Activated CD4-positive, alpha-beta memory T cell treated with anti-CD3 and anti-CD28 coated beads for 36 hours (primary cell): ENCODE measurements at regions of chr20 and their contacts with region 1.

Region 1: GRCh38 chr20:45934586-45935415 is at the start of gene PCIF1:
- DNase-seq: peak; percentile 99
- H3K4me3 Mint-ChIP-seq: peak within 1 kb of the TSS; percentile 99
- H3K27ac Mint-ChIP-seq: peak within 1 kb of the TSS; percentile 99
- H3K4me1 Mint-ChIP-seq: peaks cover 32% of the 10 kb centered on the region
- H3K27me3 Mint-ChIP-seq: no peaks in the 10 kb centered on the region
- total RNA-seq, gene PCIF1: 29.9 to 33.0 TPM

Region 2: DNA sequence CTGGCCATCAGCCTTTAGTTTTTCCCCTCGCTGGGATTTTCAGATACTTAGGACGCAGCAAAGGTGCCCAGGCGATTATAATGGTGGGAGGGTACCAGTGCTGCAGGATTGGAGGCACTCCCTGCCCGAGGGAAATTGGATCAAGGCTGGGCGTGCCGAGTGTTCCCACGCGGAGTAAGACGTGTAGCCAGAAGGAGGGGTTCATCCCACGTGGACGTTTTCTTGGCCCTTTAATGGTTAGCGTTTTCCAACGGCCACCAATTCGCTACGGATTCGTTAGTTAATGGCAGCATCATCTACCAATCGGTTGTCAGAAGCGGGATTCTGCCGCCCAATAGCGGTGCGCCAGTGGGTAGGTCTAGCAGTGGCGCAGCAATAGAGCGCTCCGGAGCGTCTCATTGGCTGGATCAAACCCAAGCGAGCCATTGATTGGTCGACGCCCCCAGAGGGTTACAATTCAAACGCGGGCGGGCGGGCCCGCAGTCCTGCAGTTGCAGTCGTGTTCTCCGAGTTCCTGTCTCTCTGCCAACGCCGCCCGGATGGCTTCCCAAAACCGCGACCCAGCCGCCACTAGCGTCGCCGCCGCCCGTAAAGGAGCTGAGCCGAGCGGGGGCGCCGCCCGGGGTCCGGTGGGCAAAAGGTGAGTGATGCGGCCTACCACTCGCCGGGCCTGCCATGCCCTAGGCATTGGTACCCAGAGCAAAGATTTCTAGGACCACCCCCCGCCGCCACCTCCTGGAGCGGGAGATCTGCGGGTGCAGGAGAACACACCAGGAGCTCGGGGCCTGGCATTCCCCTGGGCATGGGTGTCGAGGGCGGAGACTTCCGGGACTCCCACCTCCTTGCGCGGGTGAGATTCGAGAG is 122.4 kb before region 1 on chr20 and contains the start of gene UBE2C:
- CTCF ChIA-PET with region 1: interaction called, 3 read pairs
- POLR2A ChIA-PET with region 1: interaction called, 12 read pairs
- intact Hi-C with region 1: loop called (anchors 1 kb)
- DNase-seq: peak; percentile 98
- H3K4me3 Mint-ChIP-seq: peak within 1 kb of the TSS; percentile 91
- H3K27ac Mint-ChIP-seq: peak within 1 kb of the TSS; percentile 68
- H3K4me1 Mint-ChIP-seq: peaks cover 13% of the 10 kb centered on the region
- H3K27me3 Mint-ChIP-seq: no peaks in the 10 kb centered on the region
- total RNA-seq, gene UBE2C: 192 to 196 TPM

Region 3: DNA sequence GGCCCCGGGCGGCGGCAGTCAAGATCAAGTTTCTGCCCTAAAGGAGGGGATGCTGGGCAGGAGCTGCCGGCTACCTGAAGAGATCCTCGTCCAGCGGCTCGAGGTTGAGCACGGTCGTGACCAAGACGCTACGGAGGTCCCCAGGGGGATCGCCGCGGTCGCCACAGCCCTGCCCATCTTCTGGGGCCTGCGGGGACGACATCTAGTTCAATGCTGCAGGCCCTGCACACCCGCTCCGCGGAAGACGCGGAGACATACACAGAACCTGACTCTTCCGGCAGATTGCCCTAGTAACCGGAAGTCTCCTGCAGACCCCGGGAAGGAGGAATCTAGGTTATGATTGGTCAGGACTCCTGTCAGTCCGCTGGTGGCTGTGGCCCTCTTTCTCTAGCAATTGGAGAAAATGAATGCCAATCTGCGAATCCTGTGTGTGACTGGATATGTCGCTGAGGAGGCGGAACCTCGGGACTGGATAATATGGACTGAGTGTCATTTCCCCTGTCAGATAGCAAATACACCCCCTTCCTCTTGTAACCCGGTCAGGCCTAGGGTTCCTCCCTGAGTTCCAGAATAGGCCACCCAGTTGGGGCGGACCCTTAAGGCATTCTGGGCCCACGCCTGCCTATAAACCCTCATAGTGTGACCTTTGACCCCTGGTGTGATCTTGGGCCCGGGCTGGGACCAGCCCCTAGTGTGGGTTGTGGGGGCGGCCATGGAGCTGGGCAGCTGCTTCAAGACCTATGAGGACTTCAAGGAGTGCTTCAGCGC is 77.5 kb before region 1 on chr20 and contains the starts of genes ACOT8 and ZSWIM3:
- CTCF ChIA-PET with region 1: no interaction called
- POLR2A ChIA-PET with region 1: interaction called, 8 read pairs
- intact Hi-C with region 1: loop called (anchors 1 kb)
- DNase-seq: peak; percentile 96
- H3K4me3 Mint-ChIP-seq: peak within 1 kb of the TSS; percentile 97
- H3K27ac Mint-ChIP-seq: peak within 1 kb of the TSS; percentile 97
- H3K4me1 Mint-ChIP-seq: peaks cover 35% of the 10 kb centered on the region
- H3K27me3 Mint-ChIP-seq: no peaks in the 10 kb centered on the region
- total RNA-seq, gene ACOT8: 25.5 to 29.0 TPM
- total RNA-seq, gene ZSWIM3: 4.7 TPM

Region 4: DNA sequence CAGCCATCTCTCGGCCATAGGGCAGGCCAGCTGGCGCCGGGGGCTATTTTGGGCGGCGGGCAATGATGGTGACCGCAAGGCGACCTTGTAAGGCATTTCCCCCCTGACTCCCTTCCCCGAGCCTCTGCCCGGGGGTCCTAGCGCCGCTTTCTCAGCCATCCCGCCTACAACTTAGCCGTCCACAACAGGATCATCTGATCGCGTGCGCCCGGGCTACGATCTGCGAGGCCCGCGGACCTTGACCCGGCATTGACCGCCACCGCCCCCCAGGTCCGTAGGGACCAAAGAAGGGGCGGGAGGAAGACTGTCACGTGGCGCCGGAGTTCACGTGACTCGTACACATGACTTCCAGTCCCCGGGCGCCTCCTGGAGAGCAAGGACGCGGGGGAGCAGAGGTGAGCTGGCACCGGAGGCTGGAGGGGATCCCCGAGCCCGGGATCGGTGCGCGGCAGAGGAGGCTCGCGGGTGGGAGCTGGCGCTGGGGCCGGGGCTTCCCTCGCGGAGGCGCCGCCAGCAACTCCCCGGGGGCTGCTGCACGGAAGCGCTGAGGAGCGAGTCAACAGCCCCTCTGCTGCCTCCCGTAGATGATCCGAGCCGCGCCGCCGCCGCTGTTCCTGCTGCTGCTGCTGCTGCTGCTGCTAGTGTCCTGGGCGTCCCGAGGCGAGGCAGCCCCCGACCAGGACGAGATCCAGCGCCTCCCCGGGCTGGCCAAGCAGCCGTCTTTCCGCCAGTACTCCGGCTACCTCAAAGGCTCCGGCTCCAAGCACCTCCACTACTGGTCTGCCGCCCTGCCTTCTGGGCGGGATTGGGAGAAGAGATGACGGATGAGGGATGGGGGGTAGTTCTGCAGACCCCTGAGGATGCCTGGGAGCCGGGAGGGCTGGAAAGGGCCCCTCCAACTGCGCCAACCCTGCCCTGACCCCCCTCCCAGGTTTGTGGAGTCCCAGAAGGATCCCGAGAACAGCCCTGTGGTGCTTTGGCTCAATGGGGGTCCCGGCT is 43.5 kb before region 1 on chr20 and contains the starts of genes CTSA and NEURL2:
- CTCF ChIA-PET with region 1: interaction called, 3 read pairs
- POLR2A ChIA-PET with region 1: interaction called, 23 read pairs
- intact Hi-C with region 1: loop called (anchors 2 kb)
- DNase-seq: peak; percentile 92
- H3K4me3 Mint-ChIP-seq: peak within 1 kb of the TSS; percentile 85
- H3K27ac Mint-ChIP-seq: peak within 1 kb of the TSS; percentile 81
- H3K4me1 Mint-ChIP-seq: peaks cover 32% of the 10 kb centered on the region
- H3K27me3 Mint-ChIP-seq: no peaks in the 10 kb centered on the region
- total RNA-seq, gene CTSA: 49.8 to 54.8 TPM
- total RNA-seq, gene NEURL2: 2.3 to 2.5 TPM

Region 5: DNA sequence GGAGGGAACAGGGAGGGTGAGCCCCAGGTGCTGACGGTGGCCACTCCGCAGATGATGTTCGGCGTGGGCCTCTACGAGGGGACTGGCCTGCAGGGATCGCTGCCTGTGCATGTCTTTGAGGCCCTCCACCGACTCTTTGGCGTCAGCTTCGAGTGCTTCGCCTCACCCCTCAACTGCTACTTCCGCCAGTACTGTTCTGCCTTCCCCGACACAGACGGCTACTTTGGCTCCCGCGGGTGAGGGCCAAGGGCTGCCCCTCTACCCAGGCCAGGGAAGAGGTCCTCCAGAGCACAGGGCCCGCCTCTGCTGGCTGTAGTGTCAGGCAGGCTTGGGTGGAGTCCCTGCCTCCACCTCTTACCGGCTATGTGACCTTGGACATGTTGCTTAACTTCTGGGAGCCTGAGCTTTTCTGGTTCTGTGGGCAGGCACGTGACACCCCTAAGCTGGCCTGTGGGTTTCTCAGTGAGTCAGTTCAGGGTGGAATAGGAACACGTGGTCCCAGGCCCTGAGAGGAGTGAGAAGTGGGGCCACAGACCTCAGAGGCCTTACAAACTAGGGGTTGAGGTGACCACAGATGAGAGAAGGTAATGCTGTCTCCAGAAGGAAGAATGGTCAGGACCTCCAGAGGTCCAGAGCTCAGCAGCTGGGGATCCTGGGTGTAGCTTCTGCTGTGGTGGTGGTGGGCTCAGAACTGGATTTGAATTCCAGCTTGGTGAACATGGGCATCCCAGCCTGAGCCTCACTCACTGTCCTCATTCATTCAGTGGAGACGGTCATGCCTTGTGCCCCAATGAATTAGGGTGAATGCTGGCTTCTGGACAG is 11.6 kb after region 1 on chr20:
- CTCF ChIA-PET with region 1: interaction called, 6 read pairs
- POLR2A ChIA-PET with region 1: interaction called, 28 read pairs
- intact Hi-C with region 1: no loop called
- DNase-seq: peak; percentile 74
- H3K4me3 Mint-ChIP-seq: no peak overlapping the region
- H3K27ac Mint-ChIP-seq: peak overlapping the region; percentile 79
- H3K4me1 Mint-ChIP-seq: peaks cover 28% of the 10 kb centered on the region
- H3K27me3 Mint-ChIP-seq: no peaks in the 10 kb centered on the region

Region 6: DNA sequence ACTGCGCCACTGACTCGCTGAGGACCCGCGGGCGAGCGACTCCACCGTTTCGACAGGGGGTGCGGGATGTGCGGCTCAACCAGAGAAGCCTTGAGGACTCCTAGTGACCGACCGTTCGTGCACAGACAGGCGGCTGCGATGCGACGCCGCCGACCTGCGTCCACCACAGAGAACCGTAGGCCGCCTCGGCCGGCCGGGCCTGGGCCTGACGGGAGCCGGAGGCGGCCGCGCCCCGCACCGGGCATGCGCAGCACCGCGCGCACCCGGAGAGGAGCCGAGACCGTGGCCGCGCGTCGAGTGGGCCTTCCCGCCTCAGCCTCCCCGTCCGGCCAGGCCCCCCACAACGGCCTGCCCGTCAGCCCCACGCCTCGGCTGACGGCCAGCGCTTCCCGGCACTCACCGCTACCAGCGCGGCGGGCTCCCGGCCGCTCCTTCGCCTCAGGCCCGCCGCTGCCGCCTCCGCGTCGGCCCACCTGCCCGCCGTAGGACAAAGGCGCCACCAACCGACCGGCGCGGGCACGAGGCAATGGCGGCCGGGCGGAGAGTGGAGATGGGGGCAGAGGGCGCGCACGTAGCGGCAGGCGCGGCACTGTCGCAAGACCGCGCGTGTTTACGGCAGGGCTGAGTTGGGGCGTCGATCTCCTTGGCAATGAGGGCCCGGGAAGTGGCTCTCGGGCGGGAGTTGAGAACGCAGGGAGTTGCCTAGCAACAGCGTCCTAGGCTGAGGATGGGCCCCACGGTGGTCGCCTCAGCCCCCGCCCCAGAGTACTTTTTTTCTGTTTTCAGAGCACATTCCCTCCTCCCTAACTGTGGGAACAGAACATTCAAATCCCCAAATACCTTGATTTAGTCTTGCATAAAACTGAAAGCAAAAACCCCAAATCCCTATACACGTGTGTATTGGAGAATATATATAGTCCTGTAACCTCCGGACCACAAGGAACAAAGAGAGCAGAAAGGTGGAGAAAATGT is 154.9 kb after region 1 on chr20 and contains the start of gene NCOA5:
- CTCF ChIA-PET with region 1: no interaction called
- POLR2A ChIA-PET with region 1: no interaction called
- intact Hi-C with region 1: loop called (anchors 1 kb)
- DNase-seq: peak; percentile 97
- H3K4me3 Mint-ChIP-seq: peak within 1 kb of the TSS; percentile 88
- H3K27ac Mint-ChIP-seq: peak within 1 kb of the TSS; percentile 83
- H3K4me1 Mint-ChIP-seq: peaks cover 49% of the 10 kb centered on the region
- H3K27me3 Mint-ChIP-seq: no peaks in the 10 kb centered on the region
- total RNA-seq, gene NCOA5: 13.1 to 13.7 TPM